ENCODE measurements at regions of chr13 and their contacts with region 1.

Region 1: GRCh38 chr13:36981156-36981743 is 17.9 kb downstream of the ALG5 start:
- DNase-seq: peak; percentile 75
- H3K4me3 ChIP-seq: no peak overlapping the region
- H3K27ac ChIP-seq: no peak overlapping the region
- H3K4me1 ChIP-seq: no peaks in the 10 kb centered on the region
- H3K27me3 ChIP-seq: no peaks in the 10 kb centered on the region
- CTCF ChIP-seq: peak; percentile 33 to 37
- POLR2A ChIP-seq: no peak

Region 2: DNA sequence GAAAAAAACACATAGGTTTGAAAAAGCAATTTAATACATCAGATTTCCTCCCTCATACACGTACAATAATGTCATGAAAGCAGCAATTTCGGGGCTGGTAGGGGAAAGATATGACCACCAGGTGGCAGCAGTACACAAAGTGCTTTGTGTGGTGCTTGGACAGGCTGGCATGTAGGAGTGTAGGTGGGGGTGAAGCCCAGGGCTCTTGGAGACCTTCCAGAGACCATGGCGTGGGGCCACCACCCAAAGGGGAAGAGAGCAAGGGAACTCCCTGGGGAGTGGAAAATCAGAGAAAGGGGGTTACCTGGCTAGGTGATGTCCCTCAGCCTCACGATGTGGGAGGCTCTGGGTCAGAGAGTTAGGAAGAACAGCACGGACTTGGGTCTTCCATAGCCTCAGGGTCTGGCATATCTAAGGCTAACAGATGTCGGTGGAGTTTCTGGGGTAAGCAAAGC is 560.8 kb before region 1 on chr13:
- CTCF ChIA-PET with region 1: interaction called, 10 read pairs
- POLR2A ChIA-PET with region 1: no interaction called
- dilution Hi-C with region 1: no loop called
- intact Hi-C with region 1: loop called (anchors 2 kb)
- DNase-seq: peak; percentile 84
- H3K4me3 ChIP-seq: no peak overlapping the region
- H3K27ac ChIP-seq: no peak overlapping the region
- H3K4me1 ChIP-seq: peaks cover 32% of the 10 kb centered on the region
- H3K27me3 ChIP-seq: no peaks in the 10 kb centered on the region
- CTCF ChIP-seq: peak; percentile 86 to 91
- POLR2A ChIP-seq: no peak

Region 3: DNA sequence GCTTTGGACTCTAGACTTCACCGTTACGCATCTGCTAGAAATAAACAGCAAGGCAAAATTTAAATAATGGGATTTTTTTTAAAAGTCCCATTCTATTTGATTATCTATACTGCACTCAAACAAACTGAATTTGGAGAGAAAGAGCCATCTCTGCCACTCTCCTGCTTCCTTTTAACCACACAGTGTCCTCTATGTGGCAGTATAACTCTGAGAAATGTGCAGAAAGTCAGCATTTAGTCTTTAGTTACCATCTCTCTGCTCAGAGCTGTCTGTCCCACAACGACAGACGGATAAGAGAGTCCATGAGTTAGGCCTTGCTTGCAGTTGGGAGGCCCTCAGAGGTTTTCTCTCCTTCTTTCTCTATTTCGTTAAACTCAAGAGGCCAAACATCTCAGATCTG is 527.7 kb before region 1 on chr13:
- CTCF ChIA-PET with region 1: interaction called, 16 read pairs
- POLR2A ChIA-PET with region 1: no interaction called
- dilution Hi-C with region 1: no loop called
- intact Hi-C with region 1: no loop called
- DNase-seq: peak; percentile 49
- H3K4me3 ChIP-seq: no peak overlapping the region
- H3K27ac ChIP-seq: no peak overlapping the region
- H3K4me1 ChIP-seq: no peaks in the 10 kb centered on the region
- H3K27me3 ChIP-seq: peaks cover 0 to 4% of the 10 kb centered on the region in 2 experiments
- CTCF ChIP-seq: peak; percentile 29 to 41
- POLR2A ChIP-seq: no peak

Region 4: DNA sequence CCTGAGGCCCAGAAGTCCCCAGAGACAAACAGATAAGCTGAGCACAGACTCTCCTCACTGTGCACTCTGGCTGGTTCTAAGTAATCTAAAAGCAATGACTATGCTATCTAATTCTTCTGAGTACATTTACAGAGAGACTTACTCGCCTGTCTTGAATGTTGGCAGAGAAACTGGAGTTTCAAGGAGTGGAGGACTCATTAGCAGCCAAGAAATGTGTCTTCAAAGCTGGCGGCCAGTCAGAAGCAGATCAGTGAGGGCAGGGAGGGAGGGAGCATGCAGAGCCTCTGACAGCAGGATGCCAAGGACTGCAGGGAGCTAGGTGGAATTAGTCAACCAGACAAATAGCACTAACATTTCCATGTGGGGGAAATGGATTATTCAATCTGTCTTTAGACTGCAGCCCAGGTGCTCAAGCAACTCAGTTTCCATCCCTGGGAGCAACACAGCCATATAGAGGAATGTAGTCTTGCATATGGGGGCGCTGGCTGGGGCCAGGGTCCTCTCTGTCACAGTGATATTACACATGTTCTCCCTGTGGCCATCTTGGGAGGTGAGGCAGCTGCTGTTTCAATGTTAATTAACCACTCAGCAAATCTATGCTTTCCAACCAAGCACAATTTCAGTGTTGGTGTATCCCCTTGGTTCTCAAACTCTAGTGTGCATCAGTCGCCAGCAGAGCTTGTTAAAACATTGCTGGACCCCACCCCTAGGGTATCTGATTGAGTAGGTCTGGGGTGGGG is 451.0 kb before region 1 on chr13:
- CTCF ChIA-PET with region 1: no interaction called
- POLR2A ChIA-PET with region 1: no interaction called
- dilution Hi-C with region 1: no loop called
- intact Hi-C with region 1: loop called (anchors 10 kb)
- DNase-seq: peak; percentile 20
- H3K4me3 ChIP-seq: no peak overlapping the region
- H3K27ac ChIP-seq: no peak overlapping the region
- H3K4me1 ChIP-seq: peaks cover 47% of the 10 kb centered on the region
- H3K27me3 ChIP-seq: no peaks in the 10 kb centered on the region
- CTCF ChIP-seq: no peak
- POLR2A ChIP-seq: no peak

Region 5: GRCh38 chr13:36848199-36848982 is 132.9 kb before region 1 on chr13:
- CTCF ChIA-PET with region 1: interaction called, 76 read pairs
- POLR2A ChIA-PET with region 1: no interaction called
- dilution Hi-C with region 1: loop called (anchors 25 kb)
- intact Hi-C with region 1: loop called (anchors 2 kb)
- DNase-seq: peak; percentile 22
- H3K4me3 ChIP-seq: no peak overlapping the region
- H3K27ac ChIP-seq: no peak overlapping the region
- H3K4me1 ChIP-seq: peaks cover 5% of the 10 kb centered on the region
- H3K27me3 ChIP-seq: no peaks in the 10 kb centered on the region
- CTCF ChIP-seq: peak in 1 of 2 donors; percentile 11
- POLR2A ChIP-seq: no peak

Region 6: DNA sequence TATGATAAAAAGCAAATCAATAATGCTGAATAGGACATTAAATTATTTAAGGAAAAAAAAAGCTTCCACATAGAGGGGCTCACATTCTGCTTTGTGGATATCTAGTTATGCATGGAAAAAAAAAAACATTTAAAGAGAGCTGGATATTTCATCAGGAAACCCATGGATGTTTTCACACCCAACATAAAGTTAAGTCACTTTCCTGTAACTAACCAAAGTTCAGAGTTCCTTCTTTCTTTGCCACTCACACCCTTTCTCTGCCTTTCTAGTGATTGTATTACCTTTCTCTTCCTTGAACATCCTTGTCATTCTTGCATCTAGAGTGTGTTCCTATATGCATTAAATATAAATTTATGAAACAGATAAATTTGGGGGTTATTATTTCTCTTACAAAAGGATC is 115.0 kb before region 1 on chr13:
- CTCF ChIA-PET with region 1: interaction called, 359 read pairs
- POLR2A ChIA-PET with region 1: no interaction called
- dilution Hi-C with region 1: loop called (anchors 25 kb)
- intact Hi-C with region 1: no loop called
- DNase-seq: peak; percentile 31
- H3K4me3 ChIP-seq: no peak overlapping the region
- H3K27ac ChIP-seq: no peak overlapping the region
- H3K4me1 ChIP-seq: peaks cover 18% of the 10 kb centered on the region
- H3K27me3 ChIP-seq: no peaks in the 10 kb centered on the region
- CTCF ChIP-seq: no peak
- POLR2A ChIP-seq: no peak

Region 7: GRCh38 chr13:36965773-36966172 is 15.5 kb before region 1 on chr13:
- CTCF ChIA-PET with region 1: interaction called, 60 read pairs
- POLR2A ChIA-PET with region 1: interaction called, 3 read pairs
- dilution Hi-C with region 1: no loop called
- intact Hi-C with region 1: no loop called
- DNase-seq: peak; percentile 95
- H3K4me3 ChIP-seq: no peak overlapping the region
- H3K27ac ChIP-seq: peak overlapping the region; percentile 93
- H3K4me1 ChIP-seq: peaks cover 33% of the 10 kb centered on the region
- H3K27me3 ChIP-seq: no peaks in the 10 kb centered on the region
- CTCF ChIP-seq: no peak
- POLR2A ChIP-seq: no peak

Region 8: GRCh38 chr13:37412241-37412921 is 431.1 kb after region 1 on chr13:
- CTCF ChIA-PET with region 1: no interaction called
- POLR2A ChIA-PET with region 1: no interaction called
- dilution Hi-C with region 1: no loop called
- intact Hi-C with region 1: no loop called
- DNase-seq: no peak
- H3K4me3 ChIP-seq: no peak overlapping the region
- H3K27ac ChIP-seq: no peak overlapping the region
- H3K4me1 ChIP-seq: peaks cover 15% of the 10 kb centered on the region
- H3K27me3 ChIP-seq: no peaks in the 10 kb centered on the region
- CTCF ChIP-seq: no peak
- POLR2A ChIP-seq: no peak